CD8-positive, alpha-beta T cell (primary cell): ENCODE measurements at regions of chr3 and their contacts with region 1.

Region 1: GRCh38 chr3:59688636-59689035 is 638.8 kb upstream of the CFAP20DC start:
- DNase-seq: no peak
- ATAC-seq: no peak
- H3K4me3 ChIP-seq: no peak overlapping the region
- H3K4me3 Mint-ChIP-seq: no peak overlapping the region
- H3K27ac ChIP-seq: no peak overlapping the region
- H3K27ac Mint-ChIP-seq: no peak overlapping the region
- H3K4me1 ChIP-seq: no peaks in the 10 kb centered on the region
- H3K4me1 Mint-ChIP-seq: no peaks in the 10 kb centered on the region
- H3K27me3 ChIP-seq: no peaks in the 10 kb centered on the region
- H3K27me3 Mint-ChIP-seq: no peaks in the 10 kb centered on the region
- CTCF ChIP-seq: no peak

Region 2: DNA sequence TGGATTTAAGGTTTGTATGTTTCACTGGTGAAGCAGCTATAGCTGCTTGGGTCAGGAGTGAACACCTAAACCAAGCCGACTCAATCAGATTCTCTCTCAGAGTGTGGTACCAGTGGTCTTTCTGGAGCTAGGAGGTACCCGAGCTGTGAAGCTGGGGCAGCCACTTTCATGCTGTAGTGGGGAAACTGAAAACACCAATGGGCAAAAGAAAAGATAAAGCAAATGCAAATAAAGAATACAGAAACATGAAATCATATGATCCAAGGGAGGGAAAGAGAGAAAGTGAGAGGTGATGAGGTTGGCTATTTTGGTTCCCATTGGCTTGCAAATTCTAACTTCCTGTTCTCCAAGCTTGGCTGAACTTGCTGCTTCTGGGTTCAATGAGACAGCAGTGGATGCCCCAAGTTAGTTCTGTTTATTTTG is 426.5 kb before region 1 on chr3:
- CTCF ChIA-PET with region 1: no interaction called
- POLR2A ChIA-PET with region 1: no interaction called
- intact Hi-C with region 1: no loop called
- DNase-seq: no peak
- ATAC-seq: no peak
- H3K4me3 ChIP-seq: no peak overlapping the region
- H3K4me3 Mint-ChIP-seq: no peak overlapping the region
- H3K27ac ChIP-seq: no peak overlapping the region
- H3K27ac Mint-ChIP-seq: no peak overlapping the region
- H3K4me1 ChIP-seq: no peaks in the 10 kb centered on the region
- H3K4me1 Mint-ChIP-seq: no peaks in the 10 kb centered on the region
- H3K27me3 ChIP-seq: no peaks in the 10 kb centered on the region
- H3K27me3 Mint-ChIP-seq: no peaks in the 10 kb centered on the region
- CTCF ChIP-seq: no peak

Region 3: DNA sequence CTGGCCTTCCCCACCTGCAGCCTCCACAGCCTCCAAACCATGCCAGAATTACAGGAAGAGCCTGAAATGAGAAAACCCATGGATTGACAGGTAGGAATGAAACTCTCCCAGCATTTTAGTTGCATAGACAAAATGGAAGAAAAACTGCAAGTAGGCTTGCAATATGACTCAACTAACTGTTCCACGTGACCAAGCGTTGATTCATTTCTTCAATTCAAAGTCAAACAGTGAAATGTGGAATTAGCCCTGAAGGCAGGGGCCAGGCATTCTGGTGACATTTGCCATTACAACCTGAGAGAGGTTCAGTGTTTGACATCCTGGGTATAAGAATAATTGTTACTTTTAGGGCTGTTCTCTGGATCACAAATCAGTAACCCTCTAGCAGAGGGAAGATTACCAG is 37.6 kb after region 1 on chr3:
- CTCF ChIA-PET with region 1: no interaction called
- POLR2A ChIA-PET with region 1: no interaction called
- intact Hi-C with region 1: loop called in 1 of 2 experiments (anchors 5 kb)
- DNase-seq: no peak
- ATAC-seq: no peak
- H3K4me3 ChIP-seq: no peak overlapping the region
- H3K4me3 Mint-ChIP-seq: no peak overlapping the region
- H3K27ac ChIP-seq: no peak overlapping the region
- H3K27ac Mint-ChIP-seq: no peak overlapping the region
- H3K4me1 ChIP-seq: peaks cover under 1% of the 10 kb centered on the region
- H3K4me1 Mint-ChIP-seq: peaks cover 12% of the 10 kb centered on the region
- H3K27me3 ChIP-seq: no peaks in the 10 kb centered on the region
- H3K27me3 Mint-ChIP-seq: no peaks in the 10 kb centered on the region
- CTCF ChIP-seq: no peak

Region 4: DNA sequence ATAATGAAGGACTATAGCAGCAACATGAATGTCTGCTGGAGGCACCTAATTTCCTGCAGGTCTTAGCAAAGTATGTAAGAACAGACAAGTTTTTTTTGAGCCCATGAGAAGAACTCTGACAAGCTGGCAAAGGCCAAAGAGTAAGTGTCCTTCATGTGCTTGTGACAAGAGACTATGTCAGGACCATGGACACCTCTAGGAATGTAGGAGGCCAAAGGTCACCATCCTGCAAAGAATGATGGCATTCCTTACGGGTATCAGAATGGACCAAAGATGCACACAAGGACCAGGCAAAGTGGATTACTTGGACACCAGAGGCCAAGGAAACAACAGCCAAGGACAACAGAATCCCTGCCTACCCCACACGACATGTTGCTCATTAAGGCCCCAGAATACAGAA is 219.6 kb after region 1 on chr3:
- CTCF ChIA-PET with region 1: no interaction called
- POLR2A ChIA-PET with region 1: no interaction called
- intact Hi-C with region 1: no loop called
- DNase-seq: no peak
- ATAC-seq: no peak
- H3K4me3 ChIP-seq: no peak overlapping the region
- H3K4me3 Mint-ChIP-seq: no peak overlapping the region
- H3K27ac ChIP-seq: no peak overlapping the region
- H3K27ac Mint-ChIP-seq: no peak overlapping the region
- H3K4me1 ChIP-seq: no peaks in the 10 kb centered on the region
- H3K4me1 Mint-ChIP-seq: peaks cover 6% of the 10 kb centered on the region
- H3K27me3 ChIP-seq: no peaks in the 10 kb centered on the region
- H3K27me3 Mint-ChIP-seq: no peaks in the 10 kb centered on the region
- CTCF ChIP-seq: no peak

Region 5: DNA sequence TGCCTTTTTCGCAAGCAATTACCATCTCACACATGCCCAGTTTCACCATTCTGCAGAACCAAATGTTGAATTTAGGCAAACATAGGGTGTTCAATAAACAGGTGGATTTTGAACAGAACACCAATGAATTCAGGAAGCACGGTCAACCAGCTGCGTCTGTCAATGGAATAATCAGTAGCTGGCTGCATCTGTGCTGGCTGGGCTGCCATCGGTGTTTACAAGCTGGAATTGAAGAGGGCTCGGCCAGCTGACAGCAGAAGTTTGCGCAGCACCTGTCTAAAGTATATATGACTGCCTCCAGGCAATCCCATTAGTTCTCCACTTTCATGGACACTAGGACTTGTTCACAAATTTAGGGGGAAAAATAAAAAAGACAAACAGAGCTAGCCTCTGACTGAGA is 357.6 kb after region 1 on chr3:
- CTCF ChIA-PET with region 1: no interaction called
- POLR2A ChIA-PET with region 1: no interaction called
- intact Hi-C with region 1: no loop called
- DNase-seq: no peak
- ATAC-seq: no peak
- H3K4me3 ChIP-seq: no peak overlapping the region
- H3K4me3 Mint-ChIP-seq: no peak overlapping the region
- H3K27ac ChIP-seq: no peak overlapping the region
- H3K27ac Mint-ChIP-seq: peak overlapping the region; percentile 20
- H3K4me1 ChIP-seq: peaks cover 12% of the 10 kb centered on the region
- H3K4me1 Mint-ChIP-seq: peaks cover 29% of the 10 kb centered on the region
- H3K27me3 ChIP-seq: no peaks in the 10 kb centered on the region
- H3K27me3 Mint-ChIP-seq: no peaks in the 10 kb centered on the region
- CTCF ChIP-seq: no peak